Activated CD4-positive, alpha-beta memory T cell treated with anti-CD3 and anti-CD28 coated beads, Interleukin-2, amount 10 ng/mL, durations not matched to agents 7 days and 5 days (primary cell): ENCODE measurements at regions of chr10 and their contacts with region 1.

Region 1: GRCh38 chr10:119165171-119166110 is at the start of gene SFXN4:
- DNase-seq: peak; percentile 85
- H3K4me3 Mint-ChIP-seq: peak within 1 kb of the TSS; percentile 88
- H3K27ac Mint-ChIP-seq: peak within 1 kb of the TSS; percentile 90
- H3K4me1 Mint-ChIP-seq: peaks cover 44% of the 10 kb centered on the region
- H3K27me3 Mint-ChIP-seq: no peaks in the 10 kb centered on the region
- total RNA-seq, gene SFXN4: 19.6 to 22.6 TPM

Region 2: DNA sequence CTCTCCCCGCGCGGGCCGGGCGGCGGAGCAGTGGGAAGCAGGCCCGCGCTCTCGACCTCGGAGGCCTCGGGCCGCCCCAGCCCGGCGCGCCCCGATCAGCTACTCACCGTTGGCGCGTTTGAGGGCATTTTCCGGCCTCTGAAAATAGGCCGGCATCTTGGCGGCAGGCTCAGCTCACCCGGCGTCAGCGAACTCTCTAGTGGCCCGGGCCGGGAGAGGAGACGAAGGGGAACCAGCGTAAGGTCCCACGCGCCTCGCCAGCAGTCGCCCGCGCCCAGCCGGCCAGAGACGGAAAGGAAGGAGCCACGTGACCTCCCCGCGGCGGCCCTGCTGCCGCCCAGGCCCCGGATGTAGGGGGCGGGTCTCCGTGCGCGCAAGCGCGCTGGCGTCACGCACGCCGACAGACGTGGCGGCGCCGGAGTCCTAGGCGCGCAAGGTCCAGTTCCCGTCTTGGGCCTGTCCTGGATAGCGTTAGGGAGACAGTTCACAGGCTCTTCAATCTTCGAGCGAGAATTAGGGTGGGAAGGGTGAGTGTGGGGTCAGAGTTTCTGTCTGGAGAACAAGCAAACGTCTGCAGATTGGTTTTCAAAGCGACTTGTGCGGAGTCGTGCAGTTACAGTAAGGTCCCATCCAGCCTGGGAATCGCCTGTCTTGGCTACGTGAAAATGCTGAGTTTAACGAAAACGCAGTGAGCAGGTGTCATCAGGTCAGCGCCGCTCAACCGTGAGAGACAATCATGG is 84.8 kb before region 1 on chr10 and contains the start of gene EIF3A:
- CTCF ChIA-PET with region 1: no interaction called
- POLR2A ChIA-PET with region 1: interaction called, 13 read pairs
- DNase-seq: peak; percentile 94
- H3K4me3 Mint-ChIP-seq: peak within 1 kb of the TSS; percentile 95
- H3K27ac Mint-ChIP-seq: peak within 1 kb of the TSS; percentile 93
- H3K4me1 Mint-ChIP-seq: peaks cover 50% of the 10 kb centered on the region
- H3K27me3 Mint-ChIP-seq: no peaks in the 10 kb centered on the region
- total RNA-seq, gene EIF3A: 129 to 130 TPM

Region 3: DNA sequence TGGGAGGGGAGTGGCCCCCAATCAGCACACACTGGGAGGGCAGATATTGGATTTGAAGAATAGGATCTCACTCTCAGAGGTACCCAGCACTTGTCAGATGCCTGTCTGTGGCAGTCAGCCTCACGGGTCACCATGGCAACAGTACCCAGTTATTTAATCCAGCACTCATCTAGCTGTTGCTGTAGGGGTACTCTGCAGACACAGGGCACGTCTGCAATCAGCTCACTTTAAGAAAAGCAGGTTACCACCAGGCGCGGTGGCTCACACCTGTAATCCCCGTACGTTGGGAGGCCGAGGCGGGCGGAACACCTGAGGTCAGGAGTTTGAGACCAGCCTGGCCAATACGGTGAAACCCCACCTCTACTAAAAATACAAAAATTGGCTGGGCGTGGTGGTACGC is 11.8 kb before region 1 on chr10:
- CTCF ChIA-PET with region 1: interaction called, 4 read pairs
- POLR2A ChIA-PET with region 1: interaction called, 11 read pairs
- DNase-seq: no peak
- H3K4me3 Mint-ChIP-seq: no peak overlapping the region
- H3K27ac Mint-ChIP-seq: no peak overlapping the region
- H3K4me1 Mint-ChIP-seq: peaks cover 2% of the 10 kb centered on the region
- H3K27me3 Mint-ChIP-seq: no peaks in the 10 kb centered on the region

Region 4: GRCh38 chr10:119178372-119179119 is 13.1 kb after region 1 on chr10 and contains the start of gene PRDX3:
- CTCF ChIA-PET with region 1: interaction called, 3 read pairs
- POLR2A ChIA-PET with region 1: interaction called, 18 read pairs
- DNase-seq: peak; percentile 94
- H3K4me3 Mint-ChIP-seq: peak within 1 kb of the TSS; percentile 96
- H3K27ac Mint-ChIP-seq: peak within 1 kb of the TSS; percentile 97
- H3K4me1 Mint-ChIP-seq: peaks cover 41% of the 10 kb centered on the region
- H3K27me3 Mint-ChIP-seq: no peaks in the 10 kb centered on the region
- total RNA-seq, gene PRDX3: 115 to 117 TPM

Region 5: GRCh38 chr10:119233821-119234220 is 68.4 kb after region 1 on chr10:
- CTCF ChIA-PET with region 1: no interaction called
- POLR2A ChIA-PET with region 1: no interaction called
- DNase-seq: no peak
- H3K4me3 Mint-ChIP-seq: no peak overlapping the region
- H3K27ac Mint-ChIP-seq: no peak overlapping the region
- H3K4me1 Mint-ChIP-seq: peaks cover 38% of the 10 kb centered on the region
- H3K27me3 Mint-ChIP-seq: no peaks in the 10 kb centered on the region